ENCODE measurements at regions of chr4 and their contacts with region 1.

Region 1: DNA sequence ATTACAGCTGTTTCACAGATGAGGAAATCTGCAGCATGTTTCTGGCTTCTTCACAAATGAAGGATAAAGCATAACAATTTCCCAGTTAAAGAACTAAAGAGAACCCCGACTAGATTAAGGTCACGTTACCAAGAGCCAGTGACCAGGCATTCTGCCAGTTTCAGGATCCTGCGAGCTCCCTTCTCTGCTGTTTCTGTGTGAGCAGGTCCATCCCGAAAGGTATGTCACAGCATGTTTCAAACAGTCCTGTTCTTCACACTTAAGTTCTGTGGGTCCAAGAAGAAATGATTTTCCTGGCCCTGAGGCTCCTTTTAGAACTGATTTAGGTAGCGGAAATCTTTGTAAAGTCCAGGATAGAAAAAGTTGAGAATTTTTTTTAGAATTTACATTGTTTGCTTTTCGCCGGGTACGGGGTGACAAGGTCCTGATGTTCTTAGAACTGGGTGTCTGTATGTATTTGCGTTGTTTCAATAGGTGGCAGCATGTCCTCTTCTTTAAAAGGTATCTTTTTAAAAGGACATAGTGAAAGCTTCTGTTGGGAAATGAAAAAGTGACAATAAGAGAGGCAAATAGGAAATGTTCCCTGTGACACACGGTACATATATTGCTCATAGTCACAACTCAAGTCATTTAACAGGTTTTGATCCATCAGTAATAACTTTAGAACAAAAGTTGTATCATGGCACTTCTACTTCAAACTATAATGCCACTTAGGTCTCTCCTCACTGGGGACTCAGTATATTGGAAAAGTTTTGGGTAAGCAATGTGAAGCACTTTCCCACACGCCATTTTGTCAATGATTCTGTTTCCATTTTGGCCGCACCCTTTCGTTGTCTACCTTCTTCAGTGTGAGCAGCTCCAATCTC is 18.4 kb downstream of the IL21 start:
- DNase-seq: no peak
- ATAC-seq: peak; percentile 74

Region 2: DNA sequence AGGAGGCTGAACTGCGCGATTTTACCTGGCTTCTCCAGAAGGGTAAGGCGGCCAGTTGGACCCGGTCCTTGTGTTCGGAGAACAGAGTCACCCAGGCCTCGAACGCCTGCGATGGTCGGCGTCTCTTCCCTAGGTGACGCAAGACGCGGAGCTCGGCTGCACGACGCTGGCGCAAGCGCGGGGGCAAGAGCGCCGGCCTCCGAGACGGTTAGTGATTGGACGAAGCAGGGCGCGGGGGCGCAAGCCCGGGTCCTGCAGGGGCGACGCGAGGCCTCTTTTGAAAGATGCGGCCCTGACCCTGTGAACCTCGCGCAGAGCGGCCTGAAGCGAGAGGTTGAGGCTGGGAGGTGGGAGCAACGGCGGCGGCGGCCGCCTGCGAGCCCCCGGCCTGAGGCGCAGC is 223.3 kb before region 1 on chr4:
- intact Hi-C with region 1: no loop called
- DNase-seq: no peak
- ATAC-seq: no peak

Region 3: GRCh38 chr4:122716825-122717448 is 114.4 kb after region 1 on chr4:
- intact Hi-C with region 1: loop called (anchors 5 kb)
- DNase-seq: peak; percentile 66
- ATAC-seq: peak; percentile 88

Region 4: DNA sequence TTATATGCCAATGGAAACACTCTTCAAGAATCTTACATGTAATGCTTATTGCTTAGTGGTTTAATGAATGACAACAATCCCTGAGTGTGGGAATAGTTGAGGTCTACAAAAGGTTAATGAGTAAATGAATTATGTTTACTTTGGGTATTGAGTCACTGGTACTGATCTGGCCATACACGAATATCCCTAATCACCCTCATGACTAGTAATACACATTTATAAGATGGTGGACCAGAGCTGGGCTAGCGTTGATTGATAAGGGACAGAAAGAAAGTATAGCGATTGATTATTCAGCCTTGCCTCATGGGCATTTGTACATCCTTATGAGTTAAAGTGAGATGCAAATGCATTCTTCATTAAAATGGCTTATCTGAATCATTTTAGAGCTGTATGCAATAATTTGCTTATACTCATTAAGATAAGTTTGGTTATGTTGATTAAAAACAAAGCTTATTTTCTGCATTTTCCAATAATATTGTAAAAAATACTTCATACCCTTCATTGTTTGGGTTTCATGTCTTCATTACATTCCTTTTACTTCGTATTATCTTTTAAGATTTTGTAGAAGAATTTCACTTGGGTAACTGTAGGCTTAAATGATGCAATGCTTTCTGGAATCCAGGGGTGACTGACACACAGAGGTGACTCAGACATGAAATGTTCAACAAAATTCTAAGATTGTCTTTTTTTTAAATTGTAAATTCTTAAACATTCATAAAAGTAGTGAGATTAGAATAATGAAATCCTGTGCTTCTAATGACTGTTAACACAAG is 271.5 kb after region 1 on chr4:
- intact Hi-C with region 1: no loop called
- DNase-seq: no peak
- ATAC-seq: no peak

Region 5: DNA sequence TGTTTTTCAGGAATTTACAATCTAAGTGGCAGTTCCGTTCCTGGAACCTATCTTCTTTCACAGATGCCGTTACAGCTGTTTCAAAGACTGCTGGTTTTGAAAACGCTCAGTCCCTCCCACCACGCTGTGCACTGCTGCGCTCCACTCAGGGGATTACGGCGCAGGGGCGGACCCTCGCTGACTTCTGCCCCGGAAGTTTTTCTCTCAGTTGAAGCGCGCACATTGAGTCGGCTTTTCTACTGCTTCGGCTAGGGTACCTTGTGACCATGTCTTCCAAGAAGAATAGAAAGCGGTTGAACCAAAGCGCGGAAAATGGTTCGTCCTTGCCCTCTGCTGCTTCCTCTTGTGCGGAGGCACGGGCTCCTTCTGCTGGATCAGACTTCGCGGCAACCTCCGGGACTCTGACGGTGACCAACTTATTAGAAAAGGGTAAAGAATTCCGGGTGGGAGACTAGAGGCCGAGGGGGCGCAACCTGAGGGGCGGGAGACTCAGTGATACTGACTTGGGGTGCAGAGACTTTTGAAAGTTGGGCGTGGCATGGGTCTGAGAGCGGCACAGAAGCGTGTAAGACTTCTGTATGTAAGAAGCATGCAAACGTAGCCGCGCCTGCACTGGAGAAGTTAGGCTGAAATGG is 320.5 kb after region 1 on chr4:
- intact Hi-C with region 1: loop called (anchors 10 kb)
- DNase-seq: peak; percentile 90
- ATAC-seq: peak; percentile 98